ENCODE measurements at regions of chr19 and their contacts with region 1.

Region 1: DNA sequence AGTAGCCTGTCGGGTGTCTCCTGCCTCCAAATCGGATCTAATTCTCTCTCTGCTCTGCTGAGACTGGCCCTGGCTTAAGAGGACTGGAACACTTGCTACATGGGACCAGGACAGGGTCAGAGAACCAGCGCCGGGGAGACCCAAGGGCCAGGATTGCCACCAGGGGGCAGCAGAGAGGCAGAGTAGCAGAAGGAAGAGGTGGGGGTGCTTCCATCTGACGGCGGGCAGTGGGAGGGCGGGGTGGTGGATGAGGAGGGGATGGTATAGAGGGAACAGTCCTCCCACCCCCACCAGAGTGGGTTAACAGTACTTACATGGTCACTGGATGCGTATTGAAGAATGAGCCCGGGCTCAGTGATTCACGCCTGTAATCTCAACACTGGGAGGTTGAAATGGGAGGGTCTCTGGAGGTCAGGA is 11.9 kb downstream of the SELENOW start:
- DNase-seq: peak; percentile 78
- H3K4me3 ChIP-seq: no peak overlapping the region
- H3K27ac ChIP-seq: no peak overlapping the region
- H3K4me1 ChIP-seq: no peaks in the 10 kb centered on the region
- CTCF ChIP-seq: peak; percentile 92

Region 2: DNA sequence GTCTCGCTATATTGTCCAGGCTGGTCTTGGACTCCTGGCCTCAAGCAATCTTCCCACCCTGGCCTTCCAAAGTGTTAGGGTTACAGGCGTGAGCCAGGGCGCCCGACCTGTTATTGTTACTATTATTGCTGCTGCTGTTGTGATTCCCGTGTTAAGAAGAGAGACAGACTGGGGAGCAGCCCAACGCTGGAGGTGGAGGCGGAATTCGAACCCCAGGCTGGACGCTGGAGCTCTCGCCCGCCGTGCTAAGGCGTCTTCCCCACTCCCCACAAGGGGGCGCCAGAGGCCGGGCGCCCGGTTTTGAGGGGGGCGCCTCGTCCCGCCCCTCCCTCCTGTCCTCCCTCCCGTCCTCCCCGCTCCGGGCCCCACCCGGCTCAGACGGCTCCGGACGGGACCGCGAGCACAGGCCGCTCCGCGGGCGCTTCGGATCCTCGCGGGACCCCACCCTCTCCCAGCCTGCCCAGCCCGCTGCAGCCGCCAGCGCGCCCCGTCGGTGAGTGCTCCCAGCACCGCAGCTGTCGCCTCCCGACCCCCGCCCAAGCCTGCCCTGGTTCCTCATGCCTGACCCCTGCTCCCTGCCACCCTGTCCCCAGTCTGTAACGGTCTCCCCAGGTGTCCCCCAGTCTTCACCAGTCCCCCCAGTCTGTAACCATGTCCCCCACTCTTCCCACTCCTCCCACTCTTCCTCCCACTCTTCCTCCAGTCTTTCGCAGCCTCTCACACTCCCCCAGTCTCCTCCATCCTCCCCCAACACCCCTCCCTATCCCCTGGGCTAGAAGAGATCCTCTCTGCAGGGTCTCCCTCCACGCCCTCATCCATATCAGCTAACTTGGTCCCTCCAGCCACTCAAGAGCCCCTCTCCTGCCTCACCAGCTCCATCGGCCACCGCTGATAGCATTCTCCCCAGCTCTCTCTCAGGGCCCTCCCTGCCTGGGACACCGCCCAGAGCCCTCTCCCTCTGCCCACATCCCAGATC is 77.1 kb before region 1 on chr19 and contains the start of gene EHD2:
- CTCF ChIA-PET with region 1: no interaction called
- POLR2A ChIA-PET with region 1: no interaction called
- intact Hi-C with region 1: loop called (anchors 2 kb)
- DNase-seq: no peak
- H3K4me3 ChIP-seq: no peak within 1 kb of the TSS
- H3K27ac ChIP-seq: no peak within 1 kb of the TSS
- H3K4me1 ChIP-seq: no peaks in the 10 kb centered on the region
- CTCF ChIP-seq: peak; percentile 81
- total RNA-seq, gene EHD2: not detected in 2 replicates

Region 3: GRCh38 chr19:47765523-47766358 is 24.7 kb before region 1 on chr19:
- CTCF ChIA-PET with region 1: no interaction called
- POLR2A ChIA-PET with region 1: no interaction called
- intact Hi-C with region 1: loop called (anchors 1 kb)
- DNase-seq: peak; percentile 70
- H3K4me3 ChIP-seq: no peak overlapping the region
- H3K27ac ChIP-seq: no peak overlapping the region
- H3K4me1 ChIP-seq: peaks cover 13% of the 10 kb centered on the region
- CTCF ChIP-seq: peak; percentile 83

Region 4: DNA sequence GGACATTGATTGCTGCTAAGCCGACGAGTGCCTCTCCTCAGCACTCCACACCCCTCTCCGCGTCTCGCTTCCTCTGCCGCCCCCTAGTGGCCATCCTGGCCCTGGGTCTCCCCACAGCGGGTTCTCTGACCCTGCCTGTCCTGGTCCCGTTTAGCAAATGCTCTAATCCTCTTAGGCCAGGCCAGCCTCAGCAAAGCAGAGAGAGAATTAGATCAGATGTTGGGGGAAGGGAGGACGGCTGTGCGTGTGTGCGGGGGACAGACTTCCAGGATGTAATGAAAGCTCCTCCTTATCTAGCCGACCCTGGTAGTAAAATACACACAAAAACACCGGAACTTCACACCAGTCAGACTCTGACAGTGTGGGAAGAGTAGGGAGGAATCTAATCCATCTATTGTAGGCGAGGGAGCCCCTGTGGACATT is 73.1 kb after region 1 on chr19:
- CTCF ChIA-PET with region 1: no interaction called
- POLR2A ChIA-PET with region 1: no interaction called
- intact Hi-C with region 1: loop called (anchors 1 kb)
- DNase-seq: peak; percentile 69
- H3K4me3 ChIP-seq: no peak overlapping the region
- H3K27ac ChIP-seq: no peak overlapping the region
- H3K4me1 ChIP-seq: no peaks in the 10 kb centered on the region
- CTCF ChIP-seq: peak; percentile 99

Measured in OCI-LY7 (cell line).